ENCODE measurements at regions of chr16 and their contacts with region 1.

Region 1: DNA sequence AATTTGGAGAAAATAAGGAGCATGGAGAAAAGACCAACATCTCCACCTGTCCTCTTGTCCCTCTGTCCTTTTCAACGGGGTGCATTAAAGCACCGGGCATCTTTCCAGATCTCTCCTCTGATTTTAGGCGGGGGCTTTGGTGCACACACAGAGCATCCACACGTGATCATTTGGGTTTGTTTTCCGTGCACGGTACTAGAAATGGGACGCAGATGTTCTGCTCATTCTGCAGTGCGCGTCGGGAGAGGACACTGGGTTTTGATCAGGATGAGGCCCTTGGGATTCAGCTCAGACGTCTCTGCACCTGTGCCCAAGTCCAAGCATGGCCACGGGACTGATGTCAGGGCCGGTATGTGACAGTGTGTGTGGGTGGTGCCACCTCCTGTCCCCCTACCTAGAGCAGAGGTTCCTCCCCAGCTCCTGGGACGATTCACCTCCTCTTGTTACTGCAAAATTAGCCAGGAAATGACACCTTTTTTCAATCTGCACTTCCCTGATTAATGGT is 31.9 kb downstream of the PDIA2 start:
- DNase-seq: no peak
- H3K4me3 ChIP-seq: no peak overlapping the region
- H3K4me3 Mint-ChIP-seq: no peak overlapping the region
- H3K27ac ChIP-seq: no peak overlapping the region
- H3K27ac Mint-ChIP-seq: peak overlapping the region in 2 of 7 donors; percentile 13 to 73
- H3K4me1 ChIP-seq: no peaks in the 10 kb centered on the region
- H3K4me1 Mint-ChIP-seq: no peaks in the 10 kb centered on the region
- H3K27me3 ChIP-seq: no peaks in the 10 kb centered on the region
- H3K27me3 Mint-ChIP-seq: no peaks in the 10 kb centered on the region
- CTCF ChIP-seq: no peak

Region 2: GRCh38 chr16:252366-253337 is 62.2 kb before region 1 on chr16:
- intact Hi-C with region 1: no loop called
- DNase-seq: peak in 2 of 3 donors; percentile 8 to 16
- H3K4me3 ChIP-seq: peak overlapping the region; percentile 8 to 55 (median 16)
- H3K4me3 Mint-ChIP-seq: peak overlapping the region; percentile 79
- H3K27ac ChIP-seq: peak overlapping the region; percentile 11 to 35
- H3K27ac Mint-ChIP-seq: peak overlapping the region; percentile 37 to 93 (median 76)
- H3K4me1 ChIP-seq: peaks cover 9 to 11% of the 10 kb centered on the region in 2 donors
- H3K4me1 Mint-ChIP-seq: peaks cover 10% of the 10 kb centered on the region
- H3K27me3 ChIP-seq: no peaks in the 10 kb centered on the region
- H3K27me3 Mint-ChIP-seq: peaks cover 0 to 3% (median 0%) of the 10 kb centered on the region in 3 donors
- CTCF ChIP-seq: no peak

Region 3: GRCh38 chr16:346587-346986 is 31.7 kb after region 1 on chr16:
- intact Hi-C with region 1: loop called in 1 of 2 experiments (anchors 5 kb)
- DNase-seq: no peak
- H3K4me3 ChIP-seq: no peak overlapping the region
- H3K4me3 Mint-ChIP-seq: no peak overlapping the region
- H3K27ac ChIP-seq: no peak overlapping the region
- H3K27ac Mint-ChIP-seq: peak overlapping the region in 3 of 7 donors; percentile 46 to 70 (median 60)
- H3K4me1 ChIP-seq: peaks cover 7 to 26% of the 10 kb centered on the region in 2 donors
- H3K4me1 Mint-ChIP-seq: peaks cover 52% of the 10 kb centered on the region
- H3K27me3 ChIP-seq: no peaks in the 10 kb centered on the region
- H3K27me3 Mint-ChIP-seq: peaks cover 0 to 1% (median 0%) of the 10 kb centered on the region in 3 donors
- CTCF ChIP-seq: no peak